ENCODE measurements at regions of chr1 and their contacts with region 1.

Region 1: DNA sequence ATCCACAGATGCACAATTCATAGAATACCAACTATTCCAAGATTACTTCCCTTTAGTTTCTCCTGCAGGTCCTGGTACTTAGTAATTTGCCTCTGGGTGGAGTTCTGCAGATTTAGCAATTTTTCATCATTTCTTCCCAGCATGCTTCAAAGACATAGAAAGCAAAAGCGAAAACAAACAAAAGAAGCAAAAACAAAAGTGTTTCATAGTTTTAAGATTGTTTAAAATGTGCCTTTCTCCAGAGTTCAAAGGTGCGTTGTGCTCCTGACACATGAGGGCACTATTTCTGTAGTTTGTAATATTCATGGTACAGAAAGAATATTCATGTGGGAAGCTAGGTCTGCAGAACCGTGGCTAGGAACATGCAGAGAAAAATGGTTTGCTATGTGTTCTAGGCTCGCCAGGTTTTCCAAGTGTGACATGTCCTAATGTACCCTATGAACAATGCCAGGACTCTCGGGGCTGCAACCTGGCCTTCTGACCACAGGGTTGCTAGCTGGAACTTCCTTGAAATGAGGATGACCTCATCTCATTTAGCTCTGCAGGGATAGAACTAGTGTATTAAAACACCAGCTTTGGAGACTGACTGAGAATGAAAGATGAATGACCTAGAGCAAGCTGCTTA is 30.0 kb upstream of the RCSD1 start:
- DNase-seq: peak; percentile 8 to 63 (median 55)
- H3K4me3 ChIP-seq: peak overlapping the region; percentile 2
- H3K4me3 Mint-ChIP-seq: peak overlapping the region in 6 of 7 donors; percentile 28 to 68 (median 47)
- H3K27ac ChIP-seq: no peak overlapping the region
- H3K27ac Mint-ChIP-seq: peak overlapping the region in 5 of 8 donors; percentile 33 to 80 (median 61)
- H3K4me1 ChIP-seq: peaks cover 33% of the 10 kb centered on the region
- H3K4me1 Mint-ChIP-seq: peaks cover 37 to 47% (median 45%) of the 10 kb centered on the region in 3 donors
- H3K27me3 ChIP-seq: no peaks in the 10 kb centered on the region
- H3K27me3 Mint-ChIP-seq: no peaks in the 10 kb centered on the region

Region 2: GRCh38 chr1:167617153-167618147 is 17.4 kb after region 1 on chr1:
- CTCF ChIA-PET with region 1: interaction called, 21 read pairs
- POLR2A ChIA-PET with region 1: interaction called, 4 read pairs
- DNase-seq: peak in 1 of 5 donors; percentile 18
- H3K4me3 ChIP-seq: peak overlapping the region; percentile 39
- H3K4me3 Mint-ChIP-seq: peak overlapping the region in 6 of 7 donors; percentile 70 to 80 (median 76)
- H3K27ac ChIP-seq: peak overlapping the region; percentile 32
- H3K27ac Mint-ChIP-seq: peak overlapping the region; percentile 37 to 94 (median 89)
- H3K4me1 ChIP-seq: peaks cover 38% of the 10 kb centered on the region
- H3K4me1 Mint-ChIP-seq: peaks cover 39 to 78% (median 50%) of the 10 kb centered on the region in 3 donors
- H3K27me3 ChIP-seq: no peaks in the 10 kb centered on the region
- H3K27me3 Mint-ChIP-seq: no peaks in the 10 kb centered on the region

Region 3: GRCh38 chr1:167635156-167635648 is 35.1 kb after region 1 on chr1:
- CTCF ChIA-PET with region 1: interaction called, 132 read pairs
- POLR2A ChIA-PET with region 1: interaction called, 18 read pairs
- DNase-seq: no peak
- H3K4me3 ChIP-seq: peak overlapping the region; percentile 1
- H3K4me3 Mint-ChIP-seq: peak overlapping the region in 4 of 7 donors; percentile 46 to 96 (median 96)
- H3K27ac ChIP-seq: no peak overlapping the region
- H3K27ac Mint-ChIP-seq: peak overlapping the region in 4 of 8 donors; percentile 33 to 99 (median 96)
- H3K4me1 ChIP-seq: peaks cover 82% of the 10 kb centered on the region
- H3K4me1 Mint-ChIP-seq: peaks cover 74 to 90% (median 79%) of the 10 kb centered on the region in 3 donors
- H3K27me3 ChIP-seq: no peaks in the 10 kb centered on the region
- H3K27me3 Mint-ChIP-seq: peaks cover 0 to 5% of the 10 kb centered on the region in 2 donors

Region 4: GRCh38 chr1:167650269-167651160 is 50.4 kb after region 1 on chr1:
- CTCF ChIA-PET with region 1: interaction called, 10 read pairs
- POLR2A ChIA-PET with region 1: interaction called, 3 read pairs
- DNase-seq: no peak
- H3K4me3 ChIP-seq: peak overlapping the region; percentile 2
- H3K4me3 Mint-ChIP-seq: peak overlapping the region in 6 of 7 donors; percentile 48 to 86 (median 77)
- H3K27ac ChIP-seq: no peak overlapping the region
- H3K27ac Mint-ChIP-seq: peak overlapping the region; percentile 83 to 98 (median 95)
- H3K4me1 ChIP-seq: peaks cover 78% of the 10 kb centered on the region
- H3K4me1 Mint-ChIP-seq: peaks cover 89 to 93% (median 93%) of the 10 kb centered on the region in 3 donors
- H3K27me3 ChIP-seq: no peaks in the 10 kb centered on the region
- H3K27me3 Mint-ChIP-seq: peaks cover 0 to 3% of the 10 kb centered on the region in 2 donors

Region 5: GRCh38 chr1:167687919-167688519 is 88.0 kb after region 1 on chr1:
- CTCF ChIA-PET with region 1: interaction called, 115 read pairs
- POLR2A ChIA-PET with region 1: interaction called, 9 read pairs
- DNase-seq: peak; percentile 60 to 79 (median 69)
- H3K4me3 ChIP-seq: no peak overlapping the region
- H3K4me3 Mint-ChIP-seq: peak overlapping the region in 1 of 7 donors; percentile 1
- H3K27ac ChIP-seq: no peak overlapping the region
- H3K27ac Mint-ChIP-seq: peak overlapping the region; percentile 9 to 91 (median 58)
- H3K4me1 ChIP-seq: peaks cover 4% of the 10 kb centered on the region
- H3K4me1 Mint-ChIP-seq: peaks cover 19 to 34% (median 22%) of the 10 kb centered on the region in 3 donors
- H3K27me3 ChIP-seq: no peaks in the 10 kb centered on the region
- H3K27me3 Mint-ChIP-seq: no peaks in the 10 kb centered on the region